Right cardiac atrium (tissue), 5 donors: ENCODE measurements at regions of chr1 and their contacts with region 1.

Region 1: GRCh38 chr1:10867138-10867721 is 70.8 kb upstream of the CASZ1 start:
- DNase-seq: peak; percentile 57 to 88 (median 84)
- ATAC-seq: peak; percentile 68 to 81
- H3K4me3 ChIP-seq: peak overlapping the region; percentile 49
- H3K27ac ChIP-seq: no peak overlapping the region
- H3K4me1 ChIP-seq: no peaks in the 10 kb centered on the region
- H3K27me3 ChIP-seq: no peaks in the 10 kb centered on the region

Region 2: GRCh38 chr1:10494754-10495474 is 372.3 kb before region 1 on chr1:
- intact Hi-C with region 1: loop called in 1 of 4 experiments (anchors 5 kb)
- DNase-seq: peak; percentile 61 to 85 (median 81)
- ATAC-seq: peak; percentile 80 to 81
- H3K4me3 ChIP-seq: no peak overlapping the region
- H3K27ac ChIP-seq: no peak overlapping the region
- H3K4me1 ChIP-seq: peaks cover 5% of the 10 kb centered on the region
- H3K27me3 ChIP-seq: no peaks in the 10 kb centered on the region

Region 3: DNA sequence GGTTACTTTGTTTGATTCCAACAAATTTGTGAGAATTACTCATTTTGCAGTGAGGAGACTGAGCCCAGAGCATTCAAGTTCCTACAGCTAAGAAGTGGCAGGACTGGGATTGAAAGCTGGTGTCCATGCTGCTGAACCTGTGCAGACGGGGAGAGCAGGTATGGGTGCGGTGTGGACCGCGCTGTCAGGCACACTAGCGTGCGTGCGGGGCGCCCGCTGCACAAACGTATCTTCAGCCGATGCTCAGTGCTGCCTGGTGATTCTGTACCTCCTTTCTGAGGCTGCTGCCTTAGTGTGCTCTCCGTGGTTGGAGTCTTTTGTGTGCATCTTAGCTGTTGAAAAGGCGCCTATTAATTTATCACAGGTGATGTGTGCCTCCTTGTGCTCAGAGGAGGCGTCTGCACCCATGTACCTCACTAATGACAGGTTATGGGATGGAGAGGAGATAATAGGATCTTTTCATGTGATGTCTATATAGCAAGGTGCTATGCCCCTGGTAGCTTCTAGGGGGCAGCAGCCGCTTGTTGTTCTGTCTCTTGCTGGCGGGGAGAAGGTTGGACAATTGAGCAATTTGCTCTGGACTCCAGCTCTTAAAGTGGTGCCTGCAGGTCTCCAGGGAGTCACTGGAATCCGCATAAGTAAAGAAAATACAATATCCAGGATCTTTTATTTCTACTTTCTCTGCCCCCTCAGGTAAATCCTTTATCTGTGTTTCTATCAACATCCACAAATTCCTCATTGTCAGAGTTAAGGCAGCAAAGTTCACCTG is 359.9 kb before region 1 on chr1:
- intact Hi-C with region 1: loop called in 3 of 4 experiments (anchors 2 to 10 kb)
- DNase-seq: peak; percentile 59 to 81 (median 71)
- ATAC-seq: peak; percentile 74 to 86
- H3K4me3 ChIP-seq: no peak overlapping the region
- H3K27ac ChIP-seq: no peak overlapping the region
- H3K4me1 ChIP-seq: peaks cover 9% of the 10 kb centered on the region
- H3K27me3 ChIP-seq: no peaks in the 10 kb centered on the region

Region 4: GRCh38 chr1:10530281-10530740 is 336.9 kb before region 1 on chr1:
- intact Hi-C with region 1: loop called in 1 of 4 experiments (anchors 5 kb)
- DNase-seq: peak; percentile 38 to 80 (median 79)
- ATAC-seq: peak; percentile 63 to 74
- H3K4me3 ChIP-seq: no peak overlapping the region
- H3K27ac ChIP-seq: no peak overlapping the region
- H3K4me1 ChIP-seq: peaks cover 12% of the 10 kb centered on the region
- H3K27me3 ChIP-seq: no peaks in the 10 kb centered on the region

Region 5: GRCh38 chr1:10679496-10680220 is 187.6 kb before region 1 on chr1:
- intact Hi-C with region 1: loop called in 2 of 4 experiments (anchors 10 kb)
- DNase-seq: peak in 1 of 3 donors; percentile 42
- ATAC-seq: peak in 1 of 2 donors; percentile 10
- H3K4me3 ChIP-seq: no peak overlapping the region
- H3K27ac ChIP-seq: no peak overlapping the region
- H3K4me1 ChIP-seq: peaks cover 25% of the 10 kb centered on the region
- H3K27me3 ChIP-seq: no peaks in the 10 kb centered on the region